Vagina (tissue), 2 donors: ENCODE measurements at regions of chr1 and their contacts with region 1.

Region 1: GRCh38 chr1:179506199-179506598 is 69.5 kb downstream of the NPHS2 start:
- DNase-seq: no peak
- H3K4me3 ChIP-seq: no peak overlapping the region
- H3K27ac ChIP-seq: no peak overlapping the region
- H3K4me1 ChIP-seq: no peaks in the 10 kb centered on the region
- H3K27me3 ChIP-seq: no peaks in the 10 kb centered on the region
- CTCF ChIP-seq: no peak
- POLR2A ChIP-seq: no peak

Region 2: DNA sequence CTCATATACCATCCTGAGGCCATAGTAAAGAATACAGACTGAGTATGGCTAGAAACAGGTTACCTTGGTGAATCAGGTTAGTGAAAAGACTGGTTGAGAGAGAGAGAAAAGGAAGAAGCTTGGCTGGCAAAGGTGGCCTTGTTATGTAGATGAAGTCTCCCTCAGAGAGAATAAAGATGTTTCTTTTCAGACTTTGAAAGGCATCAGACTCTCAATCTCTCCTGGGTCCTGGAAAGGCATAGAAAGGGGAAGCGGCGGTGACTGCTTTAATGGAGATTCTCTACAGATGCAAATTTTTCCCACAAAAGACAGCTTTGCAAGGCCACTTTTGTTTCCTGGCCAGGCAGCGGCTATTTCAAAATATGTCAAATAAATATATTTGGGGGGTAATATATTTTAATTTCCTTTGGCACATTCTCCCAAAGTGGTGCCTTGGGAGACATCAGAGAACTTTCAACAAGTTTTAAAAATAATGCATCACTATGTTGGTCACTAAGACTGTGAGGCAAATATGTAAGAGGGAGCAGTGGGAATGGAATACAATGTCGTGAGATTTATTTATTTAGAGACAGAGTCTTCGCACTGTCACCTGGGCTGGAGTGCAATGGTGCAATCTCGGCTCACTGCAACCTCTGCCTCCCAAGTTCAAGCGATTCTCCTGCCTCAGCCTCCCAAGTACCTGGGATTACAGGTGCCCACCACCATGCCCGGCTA is 23.4 kb after region 1 on chr1:
- intact Hi-C with region 1: loop called (anchors 2 kb)
- DNase-seq: no peak
- H3K4me3 ChIP-seq: no peak overlapping the region
- H3K27ac ChIP-seq: no peak overlapping the region
- H3K4me1 ChIP-seq: no peaks in the 10 kb centered on the region
- H3K27me3 ChIP-seq: no peaks in the 10 kb centered on the region
- CTCF ChIP-seq: no peak
- POLR2A ChIP-seq: no peak

Region 3: GRCh38 chr1:179558078-179558477 is 51.9 kb after region 1 on chr1:
- intact Hi-C with region 1: no loop called
- DNase-seq: no peak
- H3K4me3 ChIP-seq: no peak overlapping the region
- H3K27ac ChIP-seq: no peak overlapping the region
- H3K4me1 ChIP-seq: no peaks in the 10 kb centered on the region
- H3K27me3 ChIP-seq: no peaks in the 10 kb centered on the region
- CTCF ChIP-seq: no peak
- POLR2A ChIP-seq: no peak